HEK293T (cell line): ENCODE measurements at regions of chr22 and their contacts with region 1.

Region 1: GRCh38 chr22:46250035-46250782 is at the start of gene CDPF1:
- DNase-seq: peak; percentile 87

Region 2: DNA sequence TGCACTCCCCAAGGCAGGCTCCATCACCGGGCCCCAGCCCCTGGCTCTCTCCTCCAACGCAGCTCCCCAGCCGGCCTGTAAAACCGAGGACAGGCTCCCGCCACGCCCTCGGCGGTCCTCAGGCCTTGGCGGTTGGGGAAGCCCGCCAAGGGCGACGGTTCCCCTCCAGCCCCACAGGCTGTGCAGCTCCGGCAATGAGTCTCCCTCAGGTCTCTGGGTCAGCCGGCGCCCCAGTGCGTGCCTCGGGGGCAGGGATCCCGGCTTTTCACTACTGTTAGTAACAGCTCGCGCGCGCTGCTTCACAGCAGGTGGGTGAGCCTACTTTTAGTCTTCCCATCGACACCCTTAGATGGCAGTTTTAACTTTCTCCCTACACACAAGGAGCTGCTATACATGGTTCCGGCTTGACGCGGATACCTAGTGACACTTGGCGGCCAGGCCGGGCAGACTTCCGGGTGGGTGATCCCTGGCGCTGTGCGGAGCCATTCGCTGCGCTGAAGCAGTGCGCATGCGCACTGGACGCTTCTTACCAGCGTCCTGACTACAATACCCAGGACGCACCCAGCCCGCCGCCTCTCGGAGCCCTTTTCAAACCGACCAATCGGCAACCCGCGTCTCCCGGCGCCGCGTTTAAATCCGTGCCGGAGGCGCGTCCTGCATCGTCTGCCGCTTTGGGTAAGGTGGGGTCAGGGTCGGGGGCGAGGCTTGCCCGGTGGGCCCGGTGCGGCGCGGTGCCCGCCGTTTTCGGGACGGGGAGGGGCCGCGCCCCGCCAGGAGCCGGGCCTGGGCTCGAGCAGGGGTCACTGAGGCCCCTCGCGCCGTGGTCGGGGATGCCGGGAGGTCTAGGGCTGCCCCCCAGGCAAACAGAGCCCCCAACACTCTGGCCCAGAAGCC is 46.3 kb after region 1 on chr22 and contains the start of gene GTSE1:
- CTCF ChIA-PET with region 1: interaction called, 3 read pairs
- POLR2A ChIA-PET with region 1: interaction called, 11 read pairs
- DNase-seq: peak; percentile 99